B cell (primary cell): ENCODE measurements at regions of chr5 and their contacts with region 1.

Region 1: GRCh38 chr5:82351754-82352145 is 73.6 kb upstream of the RPS23 start:
- DNase-seq: peak; percentile 55
- ATAC-seq: peak; percentile 53
- H3K4me3 ChIP-seq: no peak overlapping the region
- H3K4me3 Mint-ChIP-seq: no peak overlapping the region
- H3K27ac ChIP-seq: no peak overlapping the region
- H3K27ac Mint-ChIP-seq: no peak overlapping the region
- H3K4me1 ChIP-seq: no peaks in the 10 kb centered on the region
- H3K4me1 Mint-ChIP-seq: peaks cover under 1% of the 10 kb centered on the region
- H3K27me3 ChIP-seq: peaks cover 0 to under 1% (median 0%) of the 10 kb centered on the region in 4 experiments
- H3K27me3 Mint-ChIP-seq: peaks cover 7% of the 10 kb centered on the region
- CTCF ChIP-seq: peak; percentile 91

Region 2: GRCh38 chr5:81838307-81838906 is 513.3 kb before region 1 on chr5:
- CTCF ChIA-PET with region 1: no interaction called
- POLR2A ChIA-PET with region 1: no interaction called
- intact Hi-C with region 1: no loop called
- DNase-seq: peak; percentile 51
- ATAC-seq: peak; percentile 66
- H3K4me3 ChIP-seq: no peak overlapping the region
- H3K4me3 Mint-ChIP-seq: no peak overlapping the region
- H3K27ac ChIP-seq: no peak overlapping the region
- H3K27ac Mint-ChIP-seq: no peak overlapping the region
- H3K4me1 ChIP-seq: no peaks in the 10 kb centered on the region
- H3K4me1 Mint-ChIP-seq: no peaks in the 10 kb centered on the region
- H3K27me3 ChIP-seq: no peaks in the 10 kb centered on the region
- H3K27me3 Mint-ChIP-seq: no peaks in the 10 kb centered on the region
- CTCF ChIP-seq: peak; percentile 41

Region 3: GRCh38 chr5:82183828-82184227 is 167.9 kb before region 1 on chr5:
- CTCF ChIA-PET with region 1: no interaction called
- POLR2A ChIA-PET with region 1: no interaction called
- intact Hi-C with region 1: no loop called
- DNase-seq: no peak
- ATAC-seq: no peak
- H3K4me3 ChIP-seq: no peak overlapping the region
- H3K4me3 Mint-ChIP-seq: no peak overlapping the region
- H3K27ac ChIP-seq: no peak overlapping the region
- H3K27ac Mint-ChIP-seq: no peak overlapping the region
- H3K4me1 ChIP-seq: no peaks in the 10 kb centered on the region
- H3K4me1 Mint-ChIP-seq: no peaks in the 10 kb centered on the region
- H3K27me3 ChIP-seq: no peaks in the 10 kb centered on the region
- H3K27me3 Mint-ChIP-seq: no peaks in the 10 kb centered on the region
- CTCF ChIP-seq: no peak

Region 4: GRCh38 chr5:82295144-82295543 is 56.6 kb before region 1 on chr5:
- CTCF ChIA-PET with region 1: no interaction called
- POLR2A ChIA-PET with region 1: no interaction called
- intact Hi-C with region 1: no loop called
- DNase-seq: no peak
- ATAC-seq: no peak
- H3K4me3 ChIP-seq: no peak overlapping the region
- H3K4me3 Mint-ChIP-seq: no peak overlapping the region
- H3K27ac ChIP-seq: no peak overlapping the region
- H3K27ac Mint-ChIP-seq: no peak overlapping the region
- H3K4me1 ChIP-seq: no peaks in the 10 kb centered on the region
- H3K4me1 Mint-ChIP-seq: no peaks in the 10 kb centered on the region
- H3K27me3 ChIP-seq: no peaks in the 10 kb centered on the region
- H3K27me3 Mint-ChIP-seq: no peaks in the 10 kb centered on the region
- CTCF ChIP-seq: no peak

Region 5: GRCh38 chr5:82526540-82526939 is 174.8 kb after region 1 on chr5:
- CTCF ChIA-PET with region 1: no interaction called
- POLR2A ChIA-PET with region 1: no interaction called
- intact Hi-C with region 1: no loop called
- DNase-seq: no peak
- ATAC-seq: no peak
- H3K4me3 ChIP-seq: no peak overlapping the region
- H3K4me3 Mint-ChIP-seq: no peak overlapping the region
- H3K27ac ChIP-seq: no peak overlapping the region
- H3K27ac Mint-ChIP-seq: no peak overlapping the region
- H3K4me1 ChIP-seq: no peaks in the 10 kb centered on the region
- H3K4me1 Mint-ChIP-seq: no peaks in the 10 kb centered on the region
- H3K27me3 ChIP-seq: no peaks in the 10 kb centered on the region
- H3K27me3 Mint-ChIP-seq: no peaks in the 10 kb centered on the region
- CTCF ChIP-seq: no peak

Region 6: GRCh38 chr5:83430130-83431010 is 1078.6 kb after region 1 on chr5:
- CTCF ChIA-PET with region 1: interaction called, 10 read pairs
- POLR2A ChIA-PET with region 1: no interaction called
- intact Hi-C with region 1: no loop called
- DNase-seq: peak; percentile 42
- ATAC-seq: no peak
- H3K4me3 ChIP-seq: no peak overlapping the region
- H3K4me3 Mint-ChIP-seq: no peak overlapping the region
- H3K27ac ChIP-seq: no peak overlapping the region
- H3K27ac Mint-ChIP-seq: no peak overlapping the region
- H3K4me1 ChIP-seq: no peaks in the 10 kb centered on the region
- H3K4me1 Mint-ChIP-seq: no peaks in the 10 kb centered on the region
- H3K27me3 ChIP-seq: no peaks in the 10 kb centered on the region
- H3K27me3 Mint-ChIP-seq: no peaks in the 10 kb centered on the region
- CTCF ChIP-seq: peak; percentile 74

Region 7: DNA sequence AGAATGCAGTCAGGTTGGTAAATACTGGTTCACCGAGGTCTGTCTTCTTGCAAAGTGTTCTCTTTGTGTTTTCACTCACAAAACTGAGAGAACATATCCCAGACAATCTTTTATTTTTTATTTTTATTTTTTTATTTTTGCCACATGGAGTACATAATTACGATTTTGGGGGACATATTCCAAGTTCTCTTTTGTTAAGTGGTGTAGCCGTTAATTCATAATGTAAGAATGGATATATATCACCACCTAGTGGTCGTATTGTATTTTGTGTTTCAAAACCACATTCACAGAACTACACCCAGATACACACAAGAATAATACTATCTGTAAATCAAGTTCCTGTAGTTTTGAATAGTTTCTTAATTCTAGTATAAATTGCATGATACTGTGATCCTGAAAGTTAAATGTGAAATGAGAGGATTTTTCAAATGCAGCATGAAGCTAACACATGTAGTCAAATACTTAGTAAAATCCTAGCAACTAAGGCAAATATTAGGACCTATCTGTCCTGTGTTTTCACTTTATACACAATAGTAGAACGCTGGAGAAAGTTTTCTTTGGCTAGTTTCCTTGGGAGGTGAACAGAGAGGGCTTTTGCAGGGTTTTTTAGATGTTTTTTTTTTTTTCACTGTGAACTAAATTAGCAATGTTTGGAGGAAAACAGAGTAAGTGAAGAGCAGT is 1212.5 kb after region 1 on chr5:
- CTCF ChIA-PET with region 1: interaction called, 23 read pairs
- POLR2A ChIA-PET with region 1: no interaction called
- intact Hi-C with region 1: no loop called
- DNase-seq: peak; percentile 34
- ATAC-seq: no peak
- H3K4me3 ChIP-seq: no peak overlapping the region
- H3K4me3 Mint-ChIP-seq: no peak overlapping the region
- H3K27ac ChIP-seq: no peak overlapping the region
- H3K27ac Mint-ChIP-seq: no peak overlapping the region
- H3K4me1 ChIP-seq: no peaks in the 10 kb centered on the region
- H3K4me1 Mint-ChIP-seq: no peaks in the 10 kb centered on the region
- H3K27me3 ChIP-seq: peaks cover 0 to 3% (median 0%) of the 10 kb centered on the region in 4 experiments
- H3K27me3 Mint-ChIP-seq: peaks cover 19% of the 10 kb centered on the region
- CTCF ChIP-seq: peak; percentile 76